GM13977 (cell line): ENCODE measurements at regions of chr14 and their contacts with region 1.

Region 1: DNA sequence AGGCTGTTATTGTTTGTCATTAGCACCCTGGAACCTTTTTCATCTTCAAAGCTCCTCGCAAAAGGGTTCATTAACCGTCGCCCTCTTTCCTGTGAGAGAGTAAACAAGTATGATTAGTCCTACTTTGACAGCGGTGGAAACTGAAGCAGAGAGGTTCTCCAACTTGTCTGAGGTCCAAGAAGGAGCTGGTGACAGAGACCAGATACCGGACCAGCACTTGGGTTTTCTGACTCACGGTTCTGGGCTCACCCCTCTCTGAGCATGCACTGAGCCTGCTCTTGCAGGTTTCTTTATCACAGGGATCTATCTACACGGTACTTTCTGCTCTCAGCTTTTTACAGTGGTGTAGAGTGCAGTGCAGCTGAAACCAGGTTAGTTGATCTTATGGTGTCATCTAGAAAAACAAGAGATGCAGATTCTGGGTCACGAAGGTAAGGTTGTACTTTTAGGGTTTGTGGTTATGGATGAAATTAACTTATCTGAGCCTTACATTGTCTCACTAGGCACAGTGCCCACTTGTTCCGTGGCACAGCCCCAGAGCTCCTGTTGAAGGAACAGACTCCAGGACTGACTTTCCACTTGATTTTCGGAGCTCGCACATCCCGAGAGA is 62.1 kb downstream of the PPP2R5C start:
- DNase-seq: peak; percentile 44
- CTCF ChIP-seq: no peak

Region 2: DNA sequence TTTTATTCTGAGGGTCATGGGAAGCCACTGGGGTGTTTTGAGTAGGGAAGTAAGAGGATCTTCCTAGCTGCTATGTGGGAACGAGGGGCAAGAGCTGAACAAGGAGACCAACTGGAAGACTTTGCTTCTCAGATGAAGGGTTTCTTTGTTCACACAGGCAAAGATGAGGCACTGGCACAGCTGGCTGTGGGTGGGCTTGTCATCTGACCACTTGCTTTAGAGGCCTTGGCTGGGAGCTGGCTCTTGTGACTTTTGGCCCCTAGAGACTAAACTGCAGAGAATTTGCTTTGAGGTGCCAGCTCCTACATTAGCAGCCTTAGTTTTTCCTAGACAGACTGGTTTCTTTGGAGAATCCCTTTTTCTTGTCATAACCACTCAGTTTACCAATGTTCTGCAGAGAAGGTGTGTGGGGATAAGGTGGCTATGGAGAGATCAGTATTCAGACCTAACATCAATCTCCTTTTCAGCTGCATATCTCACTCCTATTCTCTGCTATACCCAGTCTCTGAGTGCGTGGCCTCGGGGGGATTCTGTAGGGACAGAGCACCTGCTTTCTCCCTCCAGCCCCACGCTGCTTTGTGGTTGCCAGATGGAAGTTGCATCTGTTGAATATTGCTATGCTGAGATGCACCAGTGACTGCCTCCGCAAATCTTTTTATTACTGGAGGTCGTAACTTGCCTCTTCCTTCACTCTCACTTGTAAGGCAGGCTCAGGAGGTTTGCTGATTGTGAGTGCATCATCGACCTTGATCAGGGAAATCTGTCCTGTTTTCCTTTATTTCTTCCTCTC is 49.4 kb before region 1 on chr14:
- in situ Hi-C with region 1: loop called (anchors 10 kb)
- DNase-seq: no peak
- CTCF ChIP-seq: no peak